ENCODE measurements at regions of chr1 and their contacts with region 1.

Region 1: GRCh38 chr1:19704247-19705113 is 39.8 kb downstream of the HTR6 start:
- DNase-seq: peak; percentile 43 to 93
- H3K4me3 ChIP-seq: no peak overlapping the region
- CTCF ChIP-seq: peak in 1 of 3 donors; percentile 63
- POLR2A ChIP-seq: no peak

Region 2: DNA sequence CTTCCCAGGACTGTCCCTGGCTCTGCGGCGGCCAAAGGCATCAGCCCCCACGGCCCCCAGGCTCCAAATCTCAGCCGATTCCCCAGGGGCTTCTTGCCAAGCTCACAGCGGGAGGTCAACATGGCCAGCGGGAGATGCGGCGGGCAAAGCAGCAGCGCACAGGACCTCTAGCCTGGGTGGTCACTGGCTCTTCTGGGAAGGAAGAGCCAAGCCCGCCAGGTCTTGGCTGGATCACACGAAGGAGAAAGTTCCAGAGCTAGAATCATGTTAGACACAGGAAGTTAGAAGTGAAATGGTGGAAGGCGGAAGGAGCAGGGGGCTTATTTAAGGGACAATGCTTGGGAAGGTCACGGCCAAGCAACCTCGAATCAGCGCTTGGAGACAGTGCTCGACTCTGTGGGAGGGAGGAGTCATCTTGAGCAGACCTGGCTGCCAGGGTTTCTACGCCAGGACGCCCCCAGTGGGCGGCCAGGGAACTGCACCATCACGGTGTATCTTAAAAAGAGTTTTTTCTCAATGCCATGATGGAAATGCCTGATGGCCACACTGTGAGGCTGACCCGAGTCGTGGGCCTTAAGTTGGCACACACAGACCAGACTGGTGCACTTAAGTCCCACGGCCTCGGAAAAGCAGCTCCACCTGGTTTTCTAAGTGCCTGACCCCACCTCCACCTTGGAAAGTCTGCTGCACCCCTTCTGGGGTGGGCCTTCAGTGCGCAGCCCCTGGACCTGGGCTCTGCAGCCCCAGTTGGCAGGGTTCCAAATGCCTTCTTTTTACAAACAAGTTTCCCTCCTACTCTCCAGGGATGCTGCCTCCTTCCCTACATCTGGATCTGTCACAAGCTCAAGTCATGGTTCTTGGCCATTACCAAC is 363.0 kb before region 1 on chr1:
- intact Hi-C with region 1: loop called (anchors 5 kb)
- DNase-seq: peak; percentile 55 to 95
- H3K4me3 ChIP-seq: no peak overlapping the region
- CTCF ChIP-seq: peak in 1 of 3 donors; percentile 79
- POLR2A ChIP-seq: no peak

Measured in lower leg skin (tissue), 4 donors.